ENCODE measurements at regions of chr3 and their contacts with region 1.

Region 1: DNA sequence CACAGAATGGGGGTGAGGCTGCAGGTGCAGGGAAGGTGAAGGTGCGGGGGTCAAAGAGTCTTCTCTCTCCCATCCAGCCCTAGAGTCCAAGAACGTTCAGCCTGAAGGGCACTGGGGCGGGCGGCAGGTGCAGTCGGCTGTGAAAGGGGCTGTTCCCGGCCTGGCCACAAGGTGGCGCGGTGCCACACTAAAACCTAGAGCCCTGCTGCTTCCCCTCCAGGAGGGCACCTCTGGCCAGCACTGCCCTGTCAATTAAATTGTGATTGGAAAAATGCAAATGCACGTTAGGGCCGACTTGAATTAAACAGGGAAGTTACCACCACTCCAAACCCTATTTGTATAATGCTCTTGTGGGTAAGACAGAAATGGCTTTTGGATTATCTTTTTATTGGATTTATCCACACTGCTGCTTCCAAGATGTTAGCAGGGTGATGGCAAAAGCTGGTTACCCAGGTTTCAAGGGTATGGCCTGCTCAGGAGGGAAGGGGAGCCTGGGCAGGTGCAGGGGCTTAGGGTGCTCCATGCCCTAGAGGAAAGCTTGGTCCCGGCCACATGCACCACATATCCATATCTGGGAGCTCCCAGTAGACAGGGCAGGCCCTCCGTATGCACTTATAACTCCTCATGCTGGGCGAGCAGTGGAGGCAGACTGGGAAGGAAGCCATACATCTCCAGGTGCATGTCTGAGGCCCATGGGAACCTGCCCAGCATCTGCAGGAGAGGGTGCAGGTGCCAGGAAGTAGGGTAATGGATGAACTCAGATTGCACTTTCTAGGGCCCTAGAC is 119.8 kb downstream of the ADCY5 start:
- DNase-seq: peak; percentile 53 to 74
- ATAC-seq: peak; percentile 89 to 97
- H3K4me3 ChIP-seq: no peak overlapping the region
- H3K27ac ChIP-seq: no peak overlapping the region
- H3K4me1 ChIP-seq: no peaks in the 10 kb centered on the region
- CTCF ChIP-seq: peak; percentile 83
- EP300 ChIP-seq: no peak
- POLR2A ChIP-seq: no peak
- RAD21 ChIP-seq: peak; percentile 85 to 89

Region 2: GRCh38 chr3:123229145-123229544 is 99.9 kb before region 1 on chr3:
- CTCF ChIA-PET with region 1: no interaction called
- POLR2A ChIA-PET with region 1: no interaction called
- DNase-seq: peak in 1 of 2 experiments; percentile 25
- ATAC-seq: no peak
- H3K4me3 ChIP-seq: no peak overlapping the region
- H3K27ac ChIP-seq: no peak overlapping the region
- H3K4me1 ChIP-seq: no peaks in the 10 kb centered on the region
- CTCF ChIP-seq: no peak
- EP300 ChIP-seq: no peak
- POLR2A ChIP-seq: no peak
- RAD21 ChIP-seq: no peak

Region 3: GRCh38 chr3:123310741-123311140 is 18.3 kb before region 1 on chr3:
- CTCF ChIA-PET with region 1: interaction called, 13 read pairs
- POLR2A ChIA-PET with region 1: no interaction called
- DNase-seq: peak in 1 of 2 experiments; percentile 35
- ATAC-seq: peak in 1 of 2 experiments; percentile 64; a peak in 3 of 6 replicates
- H3K4me3 ChIP-seq: no peak overlapping the region
- H3K27ac ChIP-seq: peak overlapping the region in 1 of 2 experiments; percentile 43; a peak in 2 of 6 replicates
- H3K4me1 ChIP-seq: 0 out of 3 replicates have a peak, but pooled peaks cover 10% of the 10 kb centered on the region
- CTCF ChIP-seq: no peak
- EP300 ChIP-seq: no peak
- POLR2A ChIP-seq: no peak
- RAD21 ChIP-seq: no peak

Region 4: DNA sequence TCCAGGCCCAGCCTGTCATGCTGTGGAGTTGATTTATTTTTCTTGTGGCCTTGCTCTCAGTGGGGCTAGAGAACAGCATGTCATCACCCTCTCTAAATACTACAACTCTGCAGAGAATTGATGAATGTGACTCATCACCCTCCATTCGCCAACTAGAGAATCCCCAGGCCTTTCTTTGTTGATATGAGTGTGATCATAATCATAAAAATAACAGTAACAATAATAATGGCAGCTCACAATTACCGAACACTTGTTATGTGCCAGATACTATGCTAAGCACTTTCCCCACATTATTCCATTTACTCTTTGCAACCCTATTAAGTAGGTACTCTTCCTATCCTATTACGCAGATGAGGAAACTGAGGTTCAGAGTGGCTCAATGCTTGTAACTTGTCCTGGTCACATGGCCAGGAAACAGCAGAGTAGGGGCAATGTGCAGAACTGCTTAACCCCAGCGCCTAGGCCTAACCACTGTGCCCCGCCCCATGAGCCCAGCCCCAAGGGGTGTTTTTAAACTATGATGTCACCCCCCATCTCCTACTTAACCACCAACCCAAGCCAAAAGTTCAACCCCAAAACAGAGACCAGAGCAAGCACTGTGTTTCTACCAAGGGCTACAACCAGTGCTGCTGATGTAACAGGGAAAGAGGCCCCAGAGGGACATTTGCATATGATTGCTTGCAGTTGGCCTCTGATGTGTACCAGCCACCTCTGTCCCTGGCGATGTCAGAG is 15.3 kb after region 1 on chr3:
- CTCF ChIA-PET with region 1: interaction called, 60 read pairs
- POLR2A ChIA-PET with region 1: no interaction called
- DNase-seq: no peak
- ATAC-seq: no peak
- H3K4me3 ChIP-seq: no peak overlapping the region
- H3K27ac ChIP-seq: no peak overlapping the region
- H3K4me1 ChIP-seq: no peaks in the 10 kb centered on the region
- CTCF ChIP-seq: no peak
- EP300 ChIP-seq: no peak
- POLR2A ChIP-seq: no peak
- RAD21 ChIP-seq: no peak

Region 5: GRCh38 chr3:123390865-123391600 is 62.0 kb after region 1 on chr3:
- CTCF ChIA-PET with region 1: interaction called, 12 read pairs
- POLR2A ChIA-PET with region 1: no interaction called
- DNase-seq: no peak
- ATAC-seq: no peak
- H3K4me3 ChIP-seq: no peak overlapping the region
- H3K27ac ChIP-seq: no peak overlapping the region
- H3K4me1 ChIP-seq: peaks cover 5% of the 10 kb centered on the region
- CTCF ChIP-seq: no peak
- EP300 ChIP-seq: no peak
- POLR2A ChIP-seq: no peak
- RAD21 ChIP-seq: no peak

Region 6: GRCh38 chr3:123471106-123471505 is 142.1 kb after region 1 on chr3:
- CTCF ChIA-PET with region 1: interaction called, 11 read pairs
- POLR2A ChIA-PET with region 1: no interaction called
- DNase-seq: no peak
- ATAC-seq: no peak
- H3K4me3 ChIP-seq: no peak overlapping the region
- H3K27ac ChIP-seq: no peak overlapping the region
- H3K4me1 ChIP-seq: no peaks in the 10 kb centered on the region
- CTCF ChIP-seq: no peak
- EP300 ChIP-seq: no peak
- POLR2A ChIP-seq: no peak
- RAD21 ChIP-seq: no peak

Region 7: GRCh38 chr3:123489400-123490004 is 160.5 kb after region 1 on chr3:
- CTCF ChIA-PET with region 1: interaction called, 189 read pairs
- POLR2A ChIA-PET with region 1: no interaction called
- DNase-seq: peak; percentile 60 to 68
- ATAC-seq: peak; percentile 81 to 88
- H3K4me3 ChIP-seq: no peak overlapping the region
- H3K27ac ChIP-seq: no peak overlapping the region
- H3K4me1 ChIP-seq: no peaks in the 10 kb centered on the region
- CTCF ChIP-seq: peak; percentile 87
- EP300 ChIP-seq: no peak
- POLR2A ChIP-seq: no peak
- RAD21 ChIP-seq: peak; percentile 92 to 94

Region 8: DNA sequence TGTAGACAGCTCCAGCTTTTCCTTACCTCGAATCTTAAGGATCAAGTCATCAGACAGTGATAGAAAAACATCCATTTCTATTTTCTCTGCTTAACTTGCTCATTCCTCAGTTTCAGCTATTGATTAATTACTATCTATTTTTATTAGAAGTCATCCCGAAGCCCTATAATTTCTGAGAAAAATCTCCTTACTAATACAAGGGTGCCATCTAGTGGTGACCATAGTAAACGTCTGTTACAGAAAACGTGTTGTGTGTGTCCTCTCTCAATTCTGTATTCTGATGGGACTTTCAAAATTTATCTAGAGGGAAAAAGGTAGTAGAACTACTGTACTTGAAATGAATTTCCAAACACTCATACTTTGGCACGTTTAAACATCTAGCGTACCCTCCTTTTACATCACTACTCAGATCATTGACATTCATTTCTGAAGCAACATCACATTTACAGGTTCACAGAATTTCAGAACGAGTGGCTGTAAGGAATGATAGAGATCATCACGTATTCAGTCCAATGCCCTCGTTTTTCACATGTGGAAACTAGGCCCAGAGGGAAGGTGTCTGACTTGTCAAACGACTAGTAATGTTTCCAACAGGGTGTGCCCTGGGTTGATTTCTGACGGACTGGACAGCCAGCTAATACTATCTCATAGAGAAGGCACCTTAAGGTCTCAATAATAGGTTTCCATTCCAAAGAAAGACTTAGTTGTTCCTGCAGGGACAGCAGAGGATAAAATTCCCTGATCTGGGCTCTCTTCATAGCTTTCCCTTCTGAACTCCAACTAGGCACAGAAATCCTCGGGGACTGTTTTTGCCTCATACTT is 230.2 kb after region 1 on chr3:
- CTCF ChIA-PET with region 1: interaction called, 112 read pairs
- POLR2A ChIA-PET with region 1: no interaction called
- DNase-seq: peak; percentile 53 to 59
- ATAC-seq: peak; percentile 30 to 62; a peak in 3 of 6 replicates
- H3K4me3 ChIP-seq: no peak overlapping the region
- H3K27ac ChIP-seq: no peak overlapping the region
- H3K4me1 ChIP-seq: no peaks in the 10 kb centered on the region
- CTCF ChIP-seq: peak; percentile 78
- EP300 ChIP-seq: no peak
- POLR2A ChIP-seq: no peak
- RAD21 ChIP-seq: peak; percentile 68 to 75

Measured in A549 (cell line).